ENCODE measurements at regions of chr15 and their contacts with region 1.

Region 1: GRCh38 chr15:60966316-60966715 is 262.8 kb downstream of the RORA start:
- DNase-seq: no peak
- ATAC-seq: no peak
- H3K4me3 ChIP-seq: no peak overlapping the region
- H3K27ac ChIP-seq: no peak overlapping the region
- H3K4me1 ChIP-seq: peaks cover 29% of the 10 kb centered on the region
- H3K27me3 ChIP-seq: no peaks in the 10 kb centered on the region
- CTCF ChIP-seq: no peak

Region 2: GRCh38 chr15:61003403-61004294 is 37.3 kb after region 1 on chr15:
- intact Hi-C with region 1: no loop called
- DNase-seq: no peak
- ATAC-seq: no peak
- H3K4me3 ChIP-seq: no peak overlapping the region
- H3K27ac ChIP-seq: no peak overlapping the region
- H3K4me1 ChIP-seq: no peaks in the 10 kb centered on the region
- H3K27me3 ChIP-seq: no peaks in the 10 kb centered on the region
- CTCF ChIP-seq: no peak

Region 3: GRCh38 chr15:61112231-61112630 is 145.9 kb after region 1 on chr15:
- intact Hi-C with region 1: loop called in 1 of 2 experiments (anchors 5 kb)
- DNase-seq: no peak
- ATAC-seq: no peak
- H3K4me3 ChIP-seq: no peak overlapping the region
- H3K27ac ChIP-seq: no peak overlapping the region
- H3K4me1 ChIP-seq: peaks cover 24% of the 10 kb centered on the region
- H3K27me3 ChIP-seq: no peaks in the 10 kb centered on the region
- CTCF ChIP-seq: no peak

Measured in psoas muscle (tissue), 8 donors.